ENCODE measurements at regions of chr3 and their contacts with region 1.

Region 1: DNA sequence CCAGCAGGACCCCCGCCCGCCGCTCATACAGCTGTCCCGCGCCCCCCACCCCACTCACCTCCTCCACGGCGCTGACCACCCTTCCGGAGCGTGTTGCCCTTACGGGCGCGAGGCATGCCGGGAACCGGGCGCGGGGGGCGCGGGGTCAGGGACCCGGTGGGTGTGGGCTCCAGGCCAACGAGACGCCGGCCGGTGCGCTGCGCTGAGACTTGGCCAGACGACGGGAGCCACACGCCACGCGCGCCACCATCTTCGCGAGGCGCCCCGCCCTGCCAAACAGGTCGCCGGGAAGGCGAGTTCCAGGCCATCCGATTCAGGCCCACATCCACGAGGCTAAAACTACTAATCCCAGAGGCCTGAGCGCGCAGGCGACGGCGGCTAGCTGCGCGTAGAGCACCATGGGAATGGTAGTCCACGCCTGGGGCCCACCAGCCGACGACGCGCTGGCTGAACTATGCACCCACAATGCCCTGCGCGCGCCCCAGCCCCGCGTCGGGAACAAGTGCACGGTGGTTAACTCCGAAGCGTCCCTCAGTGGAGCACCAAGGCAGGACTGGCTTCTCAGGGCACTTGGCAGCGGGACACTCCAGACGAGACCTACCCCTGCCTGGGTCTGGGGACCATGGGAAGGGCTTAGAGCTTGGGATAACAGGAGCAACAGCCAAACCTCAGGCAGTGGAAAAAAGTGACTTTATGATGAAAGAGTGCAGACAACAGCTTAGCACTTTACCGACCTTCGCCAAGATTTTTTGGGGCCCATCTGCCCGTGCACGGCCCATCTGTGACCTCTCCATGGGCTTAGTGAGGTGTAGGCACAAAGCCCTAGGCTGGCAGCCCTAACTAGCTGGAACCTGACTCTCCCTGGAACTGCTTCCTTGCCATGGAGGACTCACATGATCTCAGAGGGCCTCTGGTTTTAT is at the start of gene IFRD2:
- DNase-seq: peak; percentile 98
- ATAC-seq: peak; percentile 99
- H3K4me3 Mint-ChIP-seq: peak within 1 kb of the TSS; percentile 88
- H3K27ac Mint-ChIP-seq: peak within 1 kb of the TSS; percentile 99
- H3K4me1 Mint-ChIP-seq: peaks cover 16% of the 10 kb centered on the region
- H3K27me3 Mint-ChIP-seq: no peaks in the 10 kb centered on the region
- total RNA-seq, gene IFRD2: 100 to 125 TPM

Region 2: DNA sequence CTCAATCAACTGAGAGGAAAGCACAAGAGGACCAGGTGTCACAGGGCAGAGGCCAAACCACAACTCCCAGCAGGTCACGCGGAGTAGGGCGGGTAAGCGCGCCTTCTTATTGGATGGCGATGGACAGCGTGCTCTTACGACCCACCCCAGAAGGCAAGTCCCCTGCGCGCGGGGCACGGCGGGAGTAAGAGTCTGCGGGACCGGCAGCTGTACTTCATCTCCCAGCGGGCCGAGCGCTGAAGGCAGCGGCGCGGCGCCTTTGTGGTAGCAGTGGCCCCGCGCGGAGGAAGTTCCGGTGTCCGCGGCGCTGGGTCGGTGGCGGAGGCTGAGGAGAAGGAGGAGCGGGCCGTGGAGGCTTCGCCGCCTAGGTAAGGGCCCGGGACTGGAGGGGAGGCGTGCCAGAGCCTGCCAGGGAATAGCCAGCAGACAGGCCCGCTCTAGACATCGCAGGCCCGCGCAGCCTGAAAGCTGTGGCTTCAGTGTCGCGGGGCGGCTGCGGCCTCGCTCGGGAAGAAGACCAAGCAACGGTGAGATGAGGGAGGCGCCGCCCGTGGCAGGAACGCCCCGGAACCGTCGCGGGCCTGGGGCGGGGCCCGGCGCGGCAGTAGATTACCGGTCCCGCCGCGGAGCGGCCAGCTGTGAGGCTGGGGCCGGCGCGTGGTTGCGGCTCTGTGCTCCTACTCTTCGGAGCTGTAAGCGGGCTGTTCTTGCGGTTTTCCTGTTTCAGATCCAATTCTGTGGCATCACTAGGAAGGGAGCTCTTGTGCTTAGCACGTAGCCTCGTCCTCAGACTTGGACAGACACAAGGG is 352.4 kb before region 1 on chr3 and contains the start of gene RBM6:
- CTCF ChIA-PET with region 1: no interaction called
- POLR2A ChIA-PET with region 1: no interaction called
- intact Hi-C with region 1: loop called in 1 of 2 experiments (anchors 1 kb)
- DNase-seq: peak; percentile 98
- ATAC-seq: peak; percentile 99
- H3K4me3 Mint-ChIP-seq: peak within 1 kb of the TSS; percentile 98
- H3K27ac Mint-ChIP-seq: peak within 1 kb of the TSS; percentile 91
- H3K4me1 Mint-ChIP-seq: peaks cover 20% of the 10 kb centered on the region
- H3K27me3 Mint-ChIP-seq: no peaks in the 10 kb centered on the region
- total RNA-seq, gene RBM6: 69.3 to 75.1 TPM

Region 3: GRCh38 chr3:50235716-50236496 is 56.5 kb before region 1 on chr3 and contains the start of gene GNAI2:
- CTCF ChIA-PET with region 1: interaction called, 8 read pairs
- POLR2A ChIA-PET with region 1: no interaction called
- intact Hi-C with region 1: loop called in 1 of 2 experiments (anchors 1 kb)
- DNase-seq: peak; percentile 99
- ATAC-seq: peak; percentile 92
- H3K4me3 Mint-ChIP-seq: peak within 1 kb of the TSS; percentile 90
- H3K27ac Mint-ChIP-seq: peak within 1 kb of the TSS; percentile 96
- H3K4me1 Mint-ChIP-seq: peaks cover 31% of the 10 kb centered on the region
- H3K27me3 Mint-ChIP-seq: no peaks in the 10 kb centered on the region
- total RNA-seq, gene GNAI2: 280 to 341 TPM

Region 4: GRCh38 chr3:50272911-50273693 is 19.3 kb before region 1 on chr3:
- CTCF ChIA-PET with region 1: interaction called, 3 read pairs
- POLR2A ChIA-PET with region 1: interaction called, 7 read pairs
- intact Hi-C with region 1: loop called in 1 of 2 experiments (anchors 1 kb)
- DNase-seq: peak; percentile 96
- ATAC-seq: peak; percentile 87
- H3K4me3 Mint-ChIP-seq: peak overlapping the region; percentile 68
- H3K27ac Mint-ChIP-seq: peak overlapping the region; percentile 58
- H3K4me1 Mint-ChIP-seq: peaks cover 25% of the 10 kb centered on the region
- H3K27me3 Mint-ChIP-seq: peaks cover 37% of the 10 kb centered on the region

Region 5: DNA sequence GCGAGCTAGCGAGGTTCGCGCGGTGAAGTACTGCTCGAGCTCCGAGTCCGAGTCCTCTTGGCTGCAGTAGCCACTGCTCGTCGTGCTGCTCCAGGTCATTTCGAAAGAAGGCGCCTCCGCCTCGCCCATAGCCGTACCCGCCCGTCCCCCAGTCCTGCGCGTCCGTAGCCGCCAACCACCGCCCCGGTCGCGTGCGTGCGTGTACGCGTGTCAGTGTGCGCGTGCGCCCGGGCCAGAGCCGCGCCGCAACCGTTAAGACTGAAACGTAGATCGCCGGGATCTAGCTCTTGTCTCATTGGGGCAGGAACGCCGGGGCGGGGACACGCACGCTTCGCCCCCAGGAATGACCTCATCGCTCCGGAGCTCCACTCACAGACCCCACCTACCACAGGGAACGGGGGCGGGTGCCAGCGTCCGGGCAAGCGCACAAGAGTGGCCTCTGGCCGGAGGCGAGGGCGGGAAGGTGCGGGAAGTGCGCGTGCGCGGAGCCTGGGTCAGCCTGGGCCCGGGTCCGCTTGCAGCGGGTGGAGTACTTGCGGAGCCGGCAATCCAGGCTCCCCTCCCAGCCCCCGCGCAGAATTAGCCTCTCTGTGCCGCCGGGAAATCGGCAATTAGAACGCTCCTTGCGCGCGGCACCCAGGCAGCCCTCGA is 44.9 kb after region 1 on chr3:
- CTCF ChIA-PET with region 1: interaction called, 4 read pairs
- POLR2A ChIA-PET with region 1: interaction called, 11 read pairs
- intact Hi-C with region 1: loop called in 1 of 2 experiments (anchors 1 kb)
- DNase-seq: peak; percentile 99
- ATAC-seq: peak; percentile 82
- H3K4me3 Mint-ChIP-seq: peak overlapping the region; percentile 83
- H3K27ac Mint-ChIP-seq: peak overlapping the region; percentile 91
- H3K4me1 Mint-ChIP-seq: peaks cover 50% of the 10 kb centered on the region
- H3K27me3 Mint-ChIP-seq: no peaks in the 10 kb centered on the region

Region 6: GRCh38 chr3:50365080-50365841 is 72.8 kb after region 1 on chr3:
- CTCF ChIA-PET with region 1: no interaction called
- POLR2A ChIA-PET with region 1: no interaction called
- intact Hi-C with region 1: loop called in 1 of 2 experiments (anchors 1 kb)
- DNase-seq: peak; percentile 98
- ATAC-seq: peak; percentile 99
- H3K4me3 Mint-ChIP-seq: peak overlapping the region; percentile 72
- H3K27ac Mint-ChIP-seq: peak overlapping the region; percentile 74
- H3K4me1 Mint-ChIP-seq: peaks cover 13% of the 10 kb centered on the region
- H3K27me3 Mint-ChIP-seq: no peaks in the 10 kb centered on the region

Region 7: GRCh38 chr3:50530001-50530970 is 237.9 kb after region 1 on chr3:
- CTCF ChIA-PET with region 1: no interaction called
- POLR2A ChIA-PET with region 1: no interaction called
- intact Hi-C with region 1: no loop called
- DNase-seq: no peak
- ATAC-seq: no peak
- H3K4me3 Mint-ChIP-seq: no peak overlapping the region
- H3K27ac Mint-ChIP-seq: no peak overlapping the region
- H3K4me1 Mint-ChIP-seq: peaks cover 4% of the 10 kb centered on the region
- H3K27me3 Mint-ChIP-seq: peaks cover 21% of the 10 kb centered on the region

Region 8: GRCh38 chr3:50674349-50675178 is 382.1 kb after region 1 on chr3 and contains the start of gene DOCK3:
- CTCF ChIA-PET with region 1: no interaction called
- POLR2A ChIA-PET with region 1: no interaction called
- intact Hi-C with region 1: no loop called
- DNase-seq: peak; percentile 79
- ATAC-seq: peak; percentile 91
- H3K4me3 Mint-ChIP-seq: peak within 1 kb of the TSS; percentile 69
- H3K27ac Mint-ChIP-seq: peak within 1 kb of the TSS; percentile 55
- H3K4me1 Mint-ChIP-seq: peaks cover 10% of the 10 kb centered on the region
- H3K27me3 Mint-ChIP-seq: peaks cover 36% of the 10 kb centered on the region
- total RNA-seq, gene DOCK3: 2.5 to 2.6 TPM